Natural killer cell (primary cell): ENCODE measurements at regions of chrX and their contacts with region 1.

Region 1: DNA sequence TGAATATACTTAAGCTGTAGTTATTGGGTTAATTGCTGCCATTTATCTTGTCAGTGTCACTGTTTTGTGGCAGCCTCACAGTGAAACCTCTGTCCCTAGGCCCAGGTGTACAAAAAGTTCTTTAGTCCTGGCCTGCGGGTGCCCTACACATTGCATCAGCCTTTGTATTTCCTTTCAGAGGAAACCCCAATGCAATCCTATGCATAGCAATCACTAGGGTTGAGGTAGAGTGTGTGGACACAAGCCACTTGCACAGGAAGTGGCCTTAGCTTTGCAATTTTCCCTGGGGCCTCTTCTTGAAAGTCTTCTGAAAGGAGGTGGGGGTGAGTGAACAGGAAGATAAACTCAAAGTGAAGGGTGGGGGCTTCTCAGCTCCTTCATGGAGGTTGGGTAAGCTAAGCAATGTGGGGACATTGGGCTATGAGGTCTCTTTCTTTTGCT is 27.8 kb downstream of the VSIG4 start:
- DNase-seq: peak in 1 of 2 donors; percentile 21
- ATAC-seq: peak; percentile 58 to 82 (median 82)
- H3K4me3 ChIP-seq: no peak overlapping the region
- H3K4me3 Mint-ChIP-seq: peak overlapping the region; percentile 55
- H3K27ac ChIP-seq: peak overlapping the region; percentile 66
- H3K27ac Mint-ChIP-seq: peak overlapping the region; percentile 75 to 82
- H3K4me1 ChIP-seq: peaks cover 44% of the 10 kb centered on the region
- H3K4me1 Mint-ChIP-seq: peaks cover 62 to 66% of the 10 kb centered on the region in 2 donors
- H3K27me3 ChIP-seq: no peaks in the 10 kb centered on the region
- H3K27me3 Mint-ChIP-seq: no peaks in the 10 kb centered on the region
- CTCF ChIP-seq: no peak

Region 2: DNA sequence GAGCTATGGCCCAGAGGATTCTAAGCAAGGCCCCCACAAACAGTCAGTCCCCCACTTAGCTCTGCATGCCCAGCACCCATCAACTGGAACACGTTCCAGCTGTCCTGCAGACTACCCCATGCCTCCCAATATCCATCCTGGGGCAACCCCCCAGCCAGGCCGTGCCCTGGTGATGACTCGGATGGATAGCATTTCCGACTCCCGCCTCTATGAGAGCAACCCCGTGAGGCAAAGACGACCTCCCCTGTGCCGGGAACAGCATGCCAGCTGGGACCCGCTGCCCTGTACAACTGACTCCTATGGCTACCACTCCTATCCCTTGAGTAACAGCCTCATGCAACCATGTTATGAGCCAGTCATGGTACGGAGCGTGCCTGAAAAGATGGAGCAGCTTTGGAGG is 509.5 kb before region 1 on chrX:
- intact Hi-C with region 1: no loop called
- DNase-seq: no peak
- ATAC-seq: no peak
- H3K4me3 ChIP-seq: no peak overlapping the region
- H3K4me3 Mint-ChIP-seq: no peak overlapping the region
- H3K27ac ChIP-seq: no peak overlapping the region
- H3K27ac Mint-ChIP-seq: no peak overlapping the region
- H3K4me1 ChIP-seq: no peaks in the 10 kb centered on the region
- H3K4me1 Mint-ChIP-seq: no peaks in the 10 kb centered on the region
- H3K27me3 ChIP-seq: no peaks in the 10 kb centered on the region
- H3K27me3 Mint-ChIP-seq: no peaks in the 10 kb centered on the region
- CTCF ChIP-seq: no peak

Region 3: GRCh38 chrX:66046612-66047235 is 34.6 kb after region 1 on chrX:
- intact Hi-C with region 1: loop called (anchors 5 kb)
- DNase-seq: peak in 1 of 2 donors; percentile 38
- ATAC-seq: peak; percentile 69 to 90 (median 82)
- H3K4me3 ChIP-seq: no peak overlapping the region
- H3K4me3 Mint-ChIP-seq: peak overlapping the region; percentile 53
- H3K27ac ChIP-seq: peak overlapping the region; percentile 86
- H3K27ac Mint-ChIP-seq: peak overlapping the region in 1 of 2 donors; percentile 95
- H3K4me1 ChIP-seq: peaks cover 15% of the 10 kb centered on the region
- H3K4me1 Mint-ChIP-seq: peaks cover 39 to 42% of the 10 kb centered on the region in 2 donors
- H3K27me3 ChIP-seq: no peaks in the 10 kb centered on the region
- H3K27me3 Mint-ChIP-seq: no peaks in the 10 kb centered on the region
- CTCF ChIP-seq: no peak

Region 4: DNA sequence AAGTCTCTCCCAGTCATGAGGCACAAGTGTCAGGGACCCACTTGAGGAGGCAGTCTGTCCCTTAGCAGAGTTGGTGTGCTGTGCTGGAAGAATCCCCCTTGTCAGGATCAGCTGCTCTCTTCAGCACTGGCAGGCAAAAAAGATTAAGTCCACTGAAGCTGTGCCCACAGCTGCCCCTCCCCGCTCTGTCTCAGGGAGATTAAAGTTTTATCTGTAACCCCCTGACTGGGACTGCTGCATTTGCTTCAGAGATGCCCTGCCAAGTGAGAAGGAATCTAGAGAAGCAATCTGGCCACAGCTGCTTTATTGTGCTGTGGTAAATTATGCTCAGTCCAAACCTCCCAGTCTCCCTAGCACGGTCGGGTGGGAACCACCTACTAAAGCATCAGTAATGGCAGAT is 114.5 kb after region 1 on chrX:
- intact Hi-C with region 1: no loop called
- DNase-seq: no peak
- ATAC-seq: no peak
- H3K4me3 ChIP-seq: no peak overlapping the region
- H3K4me3 Mint-ChIP-seq: no peak overlapping the region
- H3K27ac ChIP-seq: no peak overlapping the region
- H3K27ac Mint-ChIP-seq: no peak overlapping the region
- H3K4me1 ChIP-seq: no peaks in the 10 kb centered on the region
- H3K4me1 Mint-ChIP-seq: no peaks in the 10 kb centered on the region
- H3K27me3 ChIP-seq: no peaks in the 10 kb centered on the region
- H3K27me3 Mint-ChIP-seq: peaks cover 3 to 39% of the 10 kb centered on the region in 2 donors
- CTCF ChIP-seq: no peak